Caco-2 (cell line): ENCODE measurements at regions of chr14 and their contacts with region 1.

Region 1: GRCh38 chr14:35687335-35687939 is 121.7 kb downstream of the RALGAPA1 start:
- DNase-seq: peak; percentile 47 to 59
- H3K4me3 ChIP-seq: no peak overlapping the region
- H3K4me3 Mint-ChIP-seq: no peak overlapping the region
- H3K27ac Mint-ChIP-seq: no peak overlapping the region
- H3K4me1 ChIP-seq: no peaks in the 10 kb centered on the region
- H3K4me1 Mint-ChIP-seq: no peaks in the 10 kb centered on the region
- H3K27me3 ChIP-seq: no peaks in the 10 kb centered on the region
- H3K27me3 Mint-ChIP-seq: no peaks in the 10 kb centered on the region
- CTCF ChIP-seq: peak; percentile 73 to 76

Region 2: DNA sequence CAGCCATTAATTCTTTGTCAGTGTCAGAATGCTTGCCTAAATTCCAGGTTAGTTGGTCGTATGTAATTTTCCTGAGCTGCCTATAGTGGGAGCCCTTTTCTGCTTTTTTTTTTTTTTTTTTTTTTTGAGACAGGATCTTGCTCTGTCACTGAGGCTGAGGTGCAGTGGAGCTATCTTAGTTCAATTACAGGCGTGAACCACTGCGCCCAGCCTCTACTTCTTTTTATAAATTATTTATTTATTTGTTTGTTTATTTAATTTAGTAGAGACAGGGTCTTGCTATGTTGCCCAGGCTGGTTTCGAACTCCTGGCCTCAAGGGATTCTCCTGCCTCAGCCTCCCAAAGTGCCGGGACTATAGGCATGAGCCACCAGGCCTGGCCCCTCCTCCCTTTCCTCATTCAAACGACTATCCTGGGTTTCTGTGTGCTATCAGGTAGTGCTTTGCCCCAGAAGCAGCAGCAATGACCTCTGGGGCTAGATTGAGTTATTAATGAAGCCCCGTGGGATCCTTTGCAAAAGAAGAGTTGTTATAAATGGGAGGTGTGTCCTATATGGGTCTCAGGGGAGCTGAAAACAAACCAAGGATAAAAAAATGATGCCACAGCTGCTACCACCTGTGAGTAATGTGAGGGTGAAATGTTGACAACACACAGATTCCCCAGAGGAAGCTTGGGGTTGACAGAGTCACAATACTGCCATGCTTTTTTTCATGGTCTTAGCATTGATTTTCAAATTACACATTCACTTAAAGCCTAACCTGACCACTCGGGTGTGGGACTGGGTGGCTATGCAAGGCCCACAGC is 248.3 kb before region 1 on chr14:
- CTCF ChIA-PET with region 1: interaction called, 5 read pairs
- POLR2A ChIA-PET with region 1: no interaction called
- intact Hi-C with region 1: loop called (anchors 5 kb)
- DNase-seq: no peak
- H3K4me3 ChIP-seq: no peak overlapping the region
- H3K4me3 Mint-ChIP-seq: no peak overlapping the region
- H3K27ac Mint-ChIP-seq: no peak overlapping the region
- H3K4me1 ChIP-seq: peaks cover 13% of the 10 kb centered on the region
- H3K4me1 Mint-ChIP-seq: no peaks in the 10 kb centered on the region
- H3K27me3 ChIP-seq: no peaks in the 10 kb centered on the region
- H3K27me3 Mint-ChIP-seq: no peaks in the 10 kb centered on the region
- CTCF ChIP-seq: peak; percentile 54 to 66

Region 3: DNA sequence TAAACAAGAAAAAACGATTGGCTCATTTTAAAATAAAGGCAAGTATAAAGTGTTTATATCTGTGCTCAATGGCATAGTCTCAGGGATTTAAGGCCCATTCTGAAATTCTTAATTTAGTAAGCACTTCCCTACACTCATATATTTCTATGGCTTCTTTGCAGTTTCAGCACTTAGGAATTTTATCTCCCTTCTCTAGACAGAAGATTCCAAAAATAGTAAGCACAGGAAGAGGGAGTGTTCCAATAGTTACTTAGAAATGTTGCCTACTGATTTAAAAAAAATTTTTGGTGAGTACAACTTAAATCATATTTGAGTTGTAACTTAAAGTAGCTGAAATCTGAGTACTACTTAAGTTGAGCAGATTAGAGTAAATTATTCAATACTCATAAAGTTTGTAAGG is 133.6 kb before region 1 on chr14:
- CTCF ChIA-PET with region 1: no interaction called
- POLR2A ChIA-PET with region 1: no interaction called
- intact Hi-C with region 1: no loop called
- DNase-seq: no peak
- H3K4me3 ChIP-seq: no peak overlapping the region
- H3K4me3 Mint-ChIP-seq: no peak overlapping the region
- H3K27ac Mint-ChIP-seq: no peak overlapping the region
- H3K4me1 ChIP-seq: no peaks in the 10 kb centered on the region
- H3K4me1 Mint-ChIP-seq: no peaks in the 10 kb centered on the region
- H3K27me3 ChIP-seq: no peaks in the 10 kb centered on the region
- H3K27me3 Mint-ChIP-seq: no peaks in the 10 kb centered on the region
- CTCF ChIP-seq: no peak